HCT116 (cell line): ENCODE measurements at regions of chr6 and their contacts with region 1.

Region 1: DNA sequence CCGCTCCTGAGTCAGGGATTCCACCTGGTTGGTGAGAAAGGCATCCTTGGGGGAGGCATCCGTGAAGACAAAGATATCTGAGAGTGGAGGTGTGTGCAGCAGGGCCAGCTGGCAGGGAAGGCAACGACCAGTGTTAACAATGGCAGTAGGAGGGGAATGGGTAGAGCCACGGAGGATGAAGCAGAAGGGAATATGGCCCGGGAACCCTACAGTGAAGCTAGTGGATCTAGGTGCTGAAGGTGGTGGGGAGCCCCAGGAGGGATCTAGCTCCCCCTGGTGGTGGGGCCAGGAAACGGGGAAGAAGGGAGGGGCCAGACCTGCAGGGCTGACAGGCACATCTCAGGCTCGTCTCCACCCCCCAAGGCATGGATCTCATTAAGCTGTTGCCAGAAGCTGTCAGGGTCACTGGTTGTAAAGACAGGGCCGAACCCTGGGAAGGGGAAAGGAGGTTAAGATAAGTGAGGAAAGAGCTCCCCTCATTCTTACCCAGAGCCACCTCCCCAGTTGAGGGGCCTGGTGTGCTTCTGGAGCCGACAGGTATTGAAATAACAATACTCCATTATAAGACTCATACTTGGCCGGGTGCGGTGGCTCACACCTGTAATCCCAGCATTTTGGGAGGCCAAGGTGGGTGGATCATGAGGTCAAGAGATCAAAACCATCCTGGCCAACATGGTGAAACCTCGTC is 7.3 kb downstream of the VWA7 start:
- DNase-seq: peak; percentile 42
- ATAC-seq: peak; percentile 86
- H3K4me3 ChIP-seq: no peak overlapping the region
- H3K27ac ChIP-seq: no peak overlapping the region
- H3K4me1 ChIP-seq: peaks cover 17 to 38% of the 10 kb centered on the region in 2 experiments
- H3K27me3 ChIP-seq: no peaks in the 10 kb centered on the region
- CTCF ChIP-seq: peak in 2 of 3 experiments; percentile 95 to 97; a peak in 4 of 6 replicates
- POLR2A ChIP-seq: no peak
- RAD21 ChIP-seq: no peak

Region 2: DNA sequence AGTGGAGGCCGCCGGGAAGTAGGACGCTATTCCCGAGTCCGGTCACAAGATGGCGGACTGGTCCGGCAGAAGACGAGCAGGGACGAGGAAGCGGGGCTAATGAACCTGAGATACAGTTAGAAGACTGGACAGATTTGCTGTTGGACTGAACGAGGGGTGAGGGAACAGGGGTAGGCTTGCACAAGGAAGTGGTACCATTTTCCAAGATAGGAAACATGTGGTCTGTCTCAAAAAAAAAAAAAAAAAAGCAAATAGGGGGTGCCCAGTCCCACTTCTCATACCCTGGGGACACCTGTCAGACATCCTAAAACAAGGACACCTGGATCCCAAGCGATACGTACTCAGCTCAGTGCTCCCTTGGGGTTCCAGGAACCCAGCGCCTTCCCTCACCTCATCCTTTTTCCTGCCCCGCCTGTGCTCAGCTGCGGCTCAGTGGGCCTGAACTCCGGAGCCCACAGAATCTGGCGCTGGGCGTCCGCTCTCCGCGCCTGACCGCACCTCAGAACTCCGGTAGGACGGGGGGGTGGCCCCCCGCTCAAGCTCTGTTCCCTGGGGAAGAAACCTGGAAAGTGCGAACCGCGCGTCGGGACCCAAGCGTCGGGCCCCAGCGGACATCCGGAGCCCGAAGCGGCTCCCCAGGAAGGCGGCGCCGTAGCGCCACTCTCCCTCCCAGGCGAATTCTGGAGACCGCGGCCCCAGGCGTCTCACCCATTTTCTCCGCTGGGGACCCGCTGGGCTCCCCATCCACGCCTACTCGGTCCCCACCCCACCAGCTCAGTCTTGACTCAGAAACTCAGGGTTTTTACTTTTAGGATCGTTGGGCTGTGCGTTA is 88.8 kb before region 1 on chr6 and contains the start of gene LY6G5C:
- CTCF ChIA-PET with region 1: interaction called, 3 read pairs
- POLR2A ChIA-PET with region 1: no interaction called
- RAD21 ChIA-PET with region 1: interaction called, 3 read pairs
- intact Hi-C with region 1: loop called (anchors 1 kb)
- DNase-seq: peak; percentile 73
- ATAC-seq: peak; percentile 85
- H3K4me3 ChIP-seq: peak within 1 kb of the TSS; percentile 53 to 61
- H3K27ac ChIP-seq: peak within 1 kb of the TSS; percentile 70
- H3K4me1 ChIP-seq: peaks cover 4 to 19% of the 10 kb centered on the region in 2 experiments; a peak in 3 of 4 replicates
- H3K27me3 ChIP-seq: no peaks in the 10 kb centered on the region
- CTCF ChIP-seq: peak; percentile 43 to 90 (median 65)
- POLR2A ChIP-seq: no peak
- RAD21 ChIP-seq: peak; percentile 99
- total RNA-seq, gene LY6G5C: 1.7 TPM

Region 3: GRCh38 chr6:31702819-31703522 is 66.9 kb before region 1 on chr6 and contains the start of gene ABHD16A:
- CTCF ChIA-PET with region 1: interaction called, 10 read pairs
- POLR2A ChIA-PET with region 1: no interaction called
- RAD21 ChIA-PET with region 1: no interaction called
- intact Hi-C with region 1: no loop called
- DNase-seq: peak; percentile 98
- ATAC-seq: peak; percentile 93
- H3K4me3 ChIP-seq: peak within 1 kb of the TSS; percentile 89 to 98
- H3K27ac ChIP-seq: peak within 1 kb of the TSS; percentile 82
- H3K4me1 ChIP-seq: peaks cover 7 to 15% of the 10 kb centered on the region in 2 experiments; a peak in 3 of 4 replicates
- H3K27me3 ChIP-seq: no peaks in the 10 kb centered on the region
- CTCF ChIP-seq: 0 out of 6 replicates have a peak, but pooled peaks of 1 of the 3 experiments have one; percentile 4
- POLR2A ChIP-seq: peak; percentile 48
- RAD21 ChIP-seq: no peak; the same call in 1 of the 2 replicates
- total RNA-seq, gene ABHD16A: 32.4 TPM

Region 4: DNA sequence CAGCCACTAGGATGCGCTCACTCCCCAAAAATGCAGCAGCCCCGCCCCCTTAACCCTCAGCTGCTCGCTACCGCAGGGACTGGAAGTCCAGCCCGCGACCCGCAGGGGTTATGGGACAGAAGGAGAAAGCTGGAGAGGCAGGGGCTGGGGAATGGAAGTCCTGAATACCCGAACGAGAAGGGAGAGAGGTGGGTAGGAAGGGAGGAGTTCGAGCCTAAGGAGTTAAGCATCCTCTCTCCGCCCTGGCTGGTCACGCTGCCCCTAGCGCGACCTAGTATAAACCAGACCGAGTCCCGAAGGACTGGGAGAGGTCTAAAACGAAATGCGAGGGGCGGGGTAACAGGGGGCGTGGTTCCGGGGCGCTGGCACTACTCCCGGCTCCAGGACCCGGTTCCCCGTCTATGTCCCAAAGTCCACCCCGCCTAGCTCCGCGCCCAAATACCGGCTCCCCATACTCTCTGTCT is 40.3 kb before region 1 on chr6:
- CTCF ChIA-PET with region 1: interaction called, 13 read pairs
- POLR2A ChIA-PET with region 1: interaction called, 5 read pairs
- RAD21 ChIA-PET with region 1: interaction called in 1 of 2 experiments, 4 read pairs
- intact Hi-C with region 1: no loop called
- DNase-seq: peak; percentile 70
- ATAC-seq: peak; percentile 82
- H3K4me3 ChIP-seq: peak overlapping the region; percentile 70 to 72
- H3K27ac ChIP-seq: peak overlapping the region; percentile 90
- H3K4me1 ChIP-seq: peaks cover 12 to 35% of the 10 kb centered on the region in 2 experiments
- H3K27me3 ChIP-seq: no peaks in the 10 kb centered on the region
- CTCF ChIP-seq: peak in 2 of 3 experiments; percentile 50 to 64; a peak in 1 of 6 replicates
- POLR2A ChIP-seq: no peak
- RAD21 ChIP-seq: no peak

Region 5: GRCh38 chr6:31758281-31758680 is 11.5 kb before region 1 on chr6:
- CTCF ChIA-PET with region 1: interaction called, 10 read pairs
- POLR2A ChIA-PET with region 1: no interaction called
- RAD21 ChIA-PET with region 1: no interaction called
- intact Hi-C with region 1: no loop called
- DNase-seq: no peak
- ATAC-seq: no peak
- H3K4me3 ChIP-seq: no peak overlapping the region
- H3K27ac ChIP-seq: no peak overlapping the region
- H3K4me1 ChIP-seq: peaks cover 4 to 8% of the 10 kb centered on the region in 2 experiments; a peak in 3 of 4 replicates
- H3K27me3 ChIP-seq: no peaks in the 10 kb centered on the region
- CTCF ChIP-seq: no peak
- POLR2A ChIP-seq: no peak
- RAD21 ChIP-seq: no peak

Region 6: GRCh38 chr6:31851485-31851832 is 81.6 kb after region 1 on chr6:
- CTCF ChIA-PET with region 1: no interaction called
- POLR2A ChIA-PET with region 1: no interaction called
- RAD21 ChIA-PET with region 1: no interaction called
- intact Hi-C with region 1: no loop called
- DNase-seq: no peak
- ATAC-seq: no peak
- H3K4me3 ChIP-seq: no peak overlapping the region
- H3K27ac ChIP-seq: no peak overlapping the region
- H3K4me1 ChIP-seq: peaks cover 0 to 10% of the 10 kb centered on the region in 2 experiments; a peak in 2 of 4 replicates
- H3K27me3 ChIP-seq: no peaks in the 10 kb centered on the region
- CTCF ChIP-seq: no peak
- POLR2A ChIP-seq: no peak
- RAD21 ChIP-seq: no peak

Region 7: GRCh38 chr6:32796848-32797776 is 1027.3 kb after region 1 on chr6:
- CTCF ChIA-PET with region 1: no interaction called
- POLR2A ChIA-PET with region 1: no interaction called
- RAD21 ChIA-PET with region 1: no interaction called
- intact Hi-C with region 1: loop called (anchors 5 kb)
- DNase-seq: peak; percentile 31
- ATAC-seq: peak; percentile 93
- H3K4me3 ChIP-seq: peak overlapping the region; percentile 24 to 45
- H3K27ac ChIP-seq: no peak overlapping the region
- H3K4me1 ChIP-seq: peaks cover 0 to 5% of the 10 kb centered on the region in 2 experiments; a peak in 1 of 4 replicates
- H3K27me3 ChIP-seq: peaks cover 34% of the 10 kb centered on the region
- CTCF ChIP-seq: peak; percentile 67 to 91 (median 72); a peak in 5 of 6 replicates
- POLR2A ChIP-seq: no peak
- RAD21 ChIP-seq: peak; percentile 86